ENCODE measurements at regions of chr2 and their contacts with region 1.

Region 1: DNA sequence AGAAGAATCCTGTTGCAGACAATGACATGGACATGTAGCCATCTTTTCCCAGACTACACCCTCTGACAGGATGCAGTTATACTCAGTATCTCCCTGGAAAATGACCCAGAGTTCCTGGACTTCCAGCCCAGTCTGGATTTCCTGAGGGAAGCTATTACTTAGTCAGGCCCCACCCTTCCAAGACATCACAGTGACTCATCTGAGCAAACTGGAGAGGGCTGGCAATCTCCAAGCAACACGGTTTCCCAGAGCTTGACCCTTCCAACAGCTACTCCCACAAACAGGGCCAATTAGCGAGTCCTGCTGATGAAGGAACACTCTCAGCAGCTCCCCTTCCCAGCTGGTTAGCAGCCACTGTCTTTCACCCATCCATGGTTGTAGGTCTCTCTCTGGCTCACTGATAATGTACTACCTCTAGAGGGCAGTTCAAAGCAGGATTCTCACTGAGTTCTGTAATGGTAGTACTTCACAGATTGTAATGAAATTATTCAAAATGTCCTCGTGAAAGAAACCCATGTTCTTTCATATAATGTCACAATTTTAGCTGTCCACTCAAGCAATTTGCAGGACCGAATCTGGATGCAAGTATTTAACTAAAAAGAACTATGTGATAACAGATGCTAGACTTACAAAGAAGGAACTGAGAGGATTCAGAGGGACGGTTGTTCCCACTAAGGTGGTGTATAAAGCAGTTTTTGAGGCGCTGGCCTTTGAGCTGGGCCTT is 110.2 kb downstream of the MDH1 start:
- DNase-seq: no peak
- ATAC-seq: peak; percentile 99
- H3K4me3 ChIP-seq: no peak overlapping the region
- H3K27ac ChIP-seq: no peak overlapping the region
- H3K4me1 ChIP-seq: no peaks in the 10 kb centered on the region
- H3K27me3 ChIP-seq: no peaks in the 10 kb centered on the region
- CTCF ChIP-seq: peak; percentile 55 to 71 (median 67)
- EP300 ChIP-seq: no peak
- POLR2A ChIP-seq: no peak
- RAD21 ChIP-seq: peak; percentile 77

Region 2: GRCh38 chr2:63444565-63445295 is 254.3 kb before region 1 on chr2:
- CTCF ChIA-PET with region 1: no interaction called
- POLR2A ChIA-PET with region 1: no interaction called
- RAD21 ChIA-PET with region 1: no interaction called
- SMC1A ChIA-PET with region 1: no interaction called
- in situ Hi-C with region 1: no loop called
- intact Hi-C with region 1: no loop called
- DNase-seq: peak; percentile 28
- ATAC-seq: peak; percentile 79
- H3K4me3 ChIP-seq: peak overlapping the region; percentile 29; the same call in 1 of the 2 replicates
- H3K27ac ChIP-seq: peak overlapping the region; percentile 11; the same call in 1 of the 2 replicates
- H3K4me1 ChIP-seq: peaks cover 6% of the 10 kb centered on the region
- H3K27me3 ChIP-seq: no peaks in the 10 kb centered on the region
- CTCF ChIP-seq: no peak
- EP300 ChIP-seq: no peak
- POLR2A ChIP-seq: no peak
- RAD21 ChIP-seq: no peak

Region 3: GRCh38 chr2:63710732-63711131 is 11.7 kb after region 1 on chr2:
- CTCF ChIA-PET with region 1: interaction called, 16 read pairs
- POLR2A ChIA-PET with region 1: no interaction called
- RAD21 ChIA-PET with region 1: no interaction called
- SMC1A ChIA-PET with region 1: interaction called, 4 read pairs
- in situ Hi-C with region 1: no loop called
- intact Hi-C with region 1: no loop called
- DNase-seq: no peak
- ATAC-seq: no peak
- H3K4me3 ChIP-seq: no peak overlapping the region
- H3K27ac ChIP-seq: no peak overlapping the region
- H3K4me1 ChIP-seq: no peaks in the 10 kb centered on the region
- H3K27me3 ChIP-seq: no peaks in the 10 kb centered on the region
- CTCF ChIP-seq: no peak
- EP300 ChIP-seq: no peak
- POLR2A ChIP-seq: no peak
- RAD21 ChIP-seq: no peak

Region 4: GRCh38 chr2:63849381-63850203 is 150.6 kb after region 1 on chr2:
- CTCF ChIA-PET with region 1: interaction called, 170 read pairs
- POLR2A ChIA-PET with region 1: no interaction called
- RAD21 ChIA-PET with region 1: interaction called, 4 read pairs
- SMC1A ChIA-PET with region 1: no interaction called
- in situ Hi-C with region 1: no loop called
- intact Hi-C with region 1: no loop called
- DNase-seq: no peak
- ATAC-seq: no peak
- H3K4me3 ChIP-seq: no peak overlapping the region
- H3K27ac ChIP-seq: no peak overlapping the region
- H3K4me1 ChIP-seq: no peaks in the 10 kb centered on the region
- H3K27me3 ChIP-seq: no peaks in the 10 kb centered on the region
- CTCF ChIP-seq: no peak
- EP300 ChIP-seq: no peak
- POLR2A ChIP-seq: no peak
- RAD21 ChIP-seq: no peak

Region 5: DNA sequence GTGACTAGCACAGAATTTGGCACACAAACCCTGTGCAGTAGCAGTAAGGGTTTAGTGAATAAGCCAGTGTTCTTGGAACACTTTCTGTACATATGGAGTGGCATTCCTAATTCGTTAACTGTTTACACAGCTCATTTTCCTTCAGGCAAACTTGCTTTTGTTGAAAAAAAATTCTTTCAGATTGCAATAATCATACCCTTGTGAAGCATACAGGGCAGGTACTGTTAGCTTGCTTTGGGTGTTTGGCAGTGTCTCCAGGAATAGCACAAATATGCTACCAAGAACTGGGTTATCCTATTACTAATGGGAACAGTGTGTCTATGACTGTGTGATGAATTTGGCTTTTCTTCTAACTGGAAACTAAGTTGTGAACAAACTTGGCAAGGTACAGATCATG is 176.1 kb after region 1 on chr2:
- CTCF ChIA-PET with region 1: interaction called, 12 read pairs
- POLR2A ChIA-PET with region 1: interaction called, 5 read pairs
- RAD21 ChIA-PET with region 1: no interaction called
- SMC1A ChIA-PET with region 1: no interaction called
- in situ Hi-C with region 1: no loop called
- intact Hi-C with region 1: no loop called
- DNase-seq: no peak
- ATAC-seq: no peak
- H3K4me3 ChIP-seq: no peak overlapping the region
- H3K27ac ChIP-seq: no peak overlapping the region
- H3K4me1 ChIP-seq: no peaks in the 10 kb centered on the region
- H3K27me3 ChIP-seq: no peaks in the 10 kb centered on the region
- CTCF ChIP-seq: no peak
- EP300 ChIP-seq: no peak
- POLR2A ChIP-seq: no peak
- RAD21 ChIP-seq: no peak

Region 6: GRCh38 chr2:63888490-63889402 is 189.8 kb after region 1 on chr2:
- CTCF ChIA-PET with region 1: interaction called, 20 read pairs
- POLR2A ChIA-PET with region 1: no interaction called
- RAD21 ChIA-PET with region 1: interaction called, 8 read pairs
- SMC1A ChIA-PET with region 1: interaction called, 6 read pairs
- in situ Hi-C with region 1: no loop called
- intact Hi-C with region 1: no loop called
- DNase-seq: peak; percentile 8
- ATAC-seq: peak; percentile 94
- H3K4me3 ChIP-seq: no peak overlapping the region
- H3K27ac ChIP-seq: no peak overlapping the region
- H3K4me1 ChIP-seq: no peaks in the 10 kb centered on the region
- H3K27me3 ChIP-seq: no peaks in the 10 kb centered on the region
- CTCF ChIP-seq: peak; percentile 65 to 79 (median 79); a peak in 5 of 6 replicates
- EP300 ChIP-seq: no peak
- POLR2A ChIP-seq: no peak
- RAD21 ChIP-seq: peak; percentile 89

Measured in GM12878 (cell line).